T-cell (primary cell): ENCODE measurements at regions of chr1 and their contacts with region 1.

Region 1: DNA sequence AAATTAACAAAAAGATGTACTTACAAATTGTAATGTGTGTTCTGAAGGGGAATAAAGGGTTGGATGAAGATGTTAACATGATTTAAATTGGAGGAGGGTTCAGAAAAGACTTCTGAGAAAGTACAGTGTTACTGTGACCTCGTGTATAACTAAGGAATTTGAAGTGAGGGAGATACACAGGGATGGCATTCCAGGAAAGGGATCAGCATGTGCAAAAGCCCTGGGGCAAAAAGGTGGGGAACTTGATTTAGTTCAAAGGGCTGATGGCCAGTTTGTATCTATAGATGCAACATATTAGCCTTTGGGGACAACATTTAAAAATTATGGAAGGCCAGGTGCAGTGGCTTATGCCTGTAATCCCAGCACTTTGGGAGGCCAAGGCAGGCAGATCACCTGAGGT is 33.3 kb upstream of the DEGS1 start:
- DNase-seq: no peak
- ATAC-seq: no peak
- H3K4me3 ChIP-seq: no peak overlapping the region
- H3K4me3 Mint-ChIP-seq: no peak overlapping the region
- H3K27ac ChIP-seq: no peak overlapping the region
- H3K27ac Mint-ChIP-seq: peak overlapping the region in 1 of 2 donors; percentile 2
- H3K4me1 ChIP-seq: peaks cover 0 to 2% of the 10 kb centered on the region in 2 experiments
- H3K4me1 Mint-ChIP-seq: peaks cover 14 to 16% (median 14%) of the 10 kb centered on the region in 3 donors
- H3K27me3 ChIP-seq: no peaks in the 10 kb centered on the region
- H3K27me3 Mint-ChIP-seq: no peaks in the 10 kb centered on the region

Region 2: GRCh38 chr1:224137518-224137917 is 12.2 kb before region 1 on chr1:
- CTCF ChIA-PET with region 1: interaction called in 1 of 2 experiments, 12 read pairs
- POLR2A ChIA-PET with region 1: interaction called in 1 of 2 experiments, 4 read pairs
- DNase-seq: no peak
- ATAC-seq: no peak
- H3K4me3 ChIP-seq: no peak overlapping the region
- H3K4me3 Mint-ChIP-seq: no peak overlapping the region
- H3K27ac ChIP-seq: no peak overlapping the region
- H3K27ac Mint-ChIP-seq: no peak overlapping the region
- H3K4me1 ChIP-seq: no peaks in the 10 kb centered on the region
- H3K4me1 Mint-ChIP-seq: peaks cover 0 to 5% (median 0%) of the 10 kb centered on the region in 3 donors
- H3K27me3 ChIP-seq: no peaks in the 10 kb centered on the region
- H3K27me3 Mint-ChIP-seq: no peaks in the 10 kb centered on the region

Region 3: GRCh38 chr1:224211206-224211962 is 61.7 kb after region 1 on chr1:
- CTCF ChIA-PET with region 1: no interaction called
- POLR2A ChIA-PET with region 1: no interaction called
- DNase-seq: peak in 1 of 35 experiments; percentile 22
- ATAC-seq: no peak
- H3K4me3 ChIP-seq: no peak overlapping the region
- H3K4me3 Mint-ChIP-seq: no peak overlapping the region
- H3K27ac ChIP-seq: no peak overlapping the region
- H3K27ac Mint-ChIP-seq: no peak overlapping the region
- H3K4me1 ChIP-seq: no peaks in the 10 kb centered on the region
- H3K4me1 Mint-ChIP-seq: peaks cover 0 to 2% (median 0%) of the 10 kb centered on the region in 3 donors
- H3K27me3 ChIP-seq: no peaks in the 10 kb centered on the region
- H3K27me3 Mint-ChIP-seq: no peaks in the 10 kb centered on the region

Region 4: DNA sequence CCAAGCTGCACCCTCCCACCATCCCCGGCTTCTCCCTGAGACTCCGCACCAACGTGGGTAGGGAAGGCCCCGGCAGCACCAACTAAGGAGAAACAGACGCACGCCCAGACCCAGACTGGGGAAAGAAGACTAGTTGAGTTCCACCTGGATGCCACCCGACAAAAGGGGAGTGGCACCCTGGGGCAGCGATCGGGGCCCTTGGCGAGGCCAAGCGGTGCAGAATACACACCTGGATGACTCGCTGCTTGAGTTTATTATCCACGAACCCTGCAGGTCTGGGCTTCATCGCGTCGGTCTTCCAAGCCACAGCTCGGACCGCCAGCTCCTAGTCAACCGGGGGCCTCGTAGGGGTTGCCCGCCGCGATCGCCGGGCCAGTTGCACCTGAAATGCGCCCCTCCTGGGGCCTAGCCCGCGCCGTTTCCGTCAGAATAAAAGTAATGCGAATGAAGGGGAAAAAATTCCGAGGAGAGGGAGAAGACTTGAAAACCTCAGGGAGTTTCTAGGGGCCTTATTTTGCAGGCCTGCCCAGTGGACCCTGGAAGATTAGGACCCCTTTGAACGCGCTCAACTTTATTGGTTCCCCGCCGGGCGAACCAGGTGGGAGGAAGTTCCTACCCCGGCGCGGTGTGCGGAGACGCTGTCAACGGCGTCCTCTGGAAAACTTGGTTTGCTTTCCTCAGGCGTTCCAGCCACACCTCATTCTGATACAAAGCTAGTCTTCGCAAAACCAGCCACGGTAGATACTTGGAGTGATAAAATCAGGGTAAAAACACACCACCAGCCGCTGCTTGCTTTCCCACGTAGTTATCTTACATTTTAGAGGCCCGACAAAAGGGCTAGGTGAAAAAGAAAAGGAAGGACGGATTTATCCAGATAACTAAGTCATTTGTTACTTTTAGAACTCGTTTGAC is 180.4 kb after region 1 on chr1 and contains the start of gene NVL:
- CTCF ChIA-PET with region 1: interaction called in 1 of 2 experiments, 10 read pairs
- POLR2A ChIA-PET with region 1: no interaction called
- DNase-seq: peak; percentile 67 to 87 (median 75)
- ATAC-seq: peak; percentile 93 to 95 (median 94)
- H3K4me3 ChIP-seq: peak within 1 kb of the TSS; percentile 81 to 98
- H3K4me3 Mint-ChIP-seq: peak within 1 kb of the TSS; percentile 95 to 98 (median 96)
- H3K27ac ChIP-seq: peak within 1 kb of the TSS; percentile 94
- H3K27ac Mint-ChIP-seq: peak within 1 kb of the TSS; percentile 98 to 100
- H3K4me1 ChIP-seq: peaks cover 17 to 21% of the 10 kb centered on the region in 2 experiments
- H3K4me1 Mint-ChIP-seq: peaks cover 43 to 61% (median 54%) of the 10 kb centered on the region in 3 donors
- H3K27me3 ChIP-seq: no peaks in the 10 kb centered on the region
- H3K27me3 Mint-ChIP-seq: no peaks in the 10 kb centered on the region
- total RNA-seq, gene NVL: 32.5 to 42.0 (median 37.6) TPM